ENCODE measurements at regions of chr5 and their contacts with region 1.

Region 1: GRCh38 chr5:169719360-169720314 is 82.6 kb downstream of the DOCK2 start:
- DNase-seq: no peak
- ATAC-seq: no peak
- H3K4me3 ChIP-seq: no peak overlapping the region
- H3K27ac ChIP-seq: no peak overlapping the region
- H3K4me1 ChIP-seq: no peaks in the 10 kb centered on the region
- H3K27me3 ChIP-seq: no peaks in the 10 kb centered on the region
- CTCF ChIP-seq: no peak

Region 2: DNA sequence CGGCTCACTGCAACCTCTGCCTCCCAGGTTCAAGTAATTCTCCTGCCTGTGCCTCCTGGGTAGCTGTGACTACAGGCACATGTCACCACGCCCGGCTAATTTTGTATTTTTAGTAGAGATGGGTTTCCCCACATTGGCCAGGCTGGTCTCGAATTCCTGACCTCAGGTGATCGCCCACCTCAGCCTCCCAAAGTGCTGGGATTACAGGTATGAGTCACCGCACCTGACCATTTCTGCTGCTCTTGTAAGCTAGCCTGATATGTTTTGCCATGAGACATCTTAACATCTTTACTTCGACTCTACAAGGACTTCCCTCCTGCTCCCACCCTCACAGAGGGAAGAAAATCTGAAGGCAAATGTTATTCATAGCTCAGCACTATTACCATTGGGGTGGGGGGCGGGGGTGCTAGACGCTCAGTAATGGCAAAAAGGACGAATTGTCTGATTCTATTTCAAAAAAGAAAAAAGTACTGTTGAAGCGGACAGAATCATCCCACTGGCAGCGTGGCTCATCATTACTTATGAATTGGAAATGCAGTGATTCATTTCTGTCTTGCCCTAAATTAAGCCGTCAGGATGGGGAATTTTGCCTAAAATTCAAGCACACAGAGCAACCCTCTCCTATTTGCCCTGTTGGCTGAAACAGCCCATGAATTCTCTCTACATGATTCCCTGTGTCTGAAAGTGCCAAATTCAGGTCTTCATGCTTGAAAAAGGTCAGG is 1474.6 kb before region 1 on chr5:
- intact Hi-C with region 1: loop called in 1 of 2 experiments (anchors 10 kb)
- DNase-seq: no peak
- ATAC-seq: no peak
- H3K4me3 ChIP-seq: no peak overlapping the region
- H3K27ac ChIP-seq: no peak overlapping the region
- H3K4me1 ChIP-seq: no peaks in the 10 kb centered on the region
- H3K27me3 ChIP-seq: no peaks in the 10 kb centered on the region
- CTCF ChIP-seq: no peak

Region 3: GRCh38 chr5:170769246-170769645 is 1049.6 kb after region 1 on chr5:
- intact Hi-C with region 1: loop called in 1 of 2 experiments (anchors 10 kb)
- DNase-seq: no peak
- ATAC-seq: no peak
- H3K4me3 ChIP-seq: no peak overlapping the region
- H3K27ac ChIP-seq: no peak overlapping the region
- H3K4me1 ChIP-seq: no peaks in the 10 kb centered on the region
- H3K27me3 ChIP-seq: peaks cover 0 to 2% (median 0%) of the 10 kb centered on the region in 3 donors
- CTCF ChIP-seq: no peak